Activated T-helper 2 cell treated with anti-CD3 and anti-CD28 coated beads, Interferon-gamma antibody, Interleukin-2, Interleukin-4, amounts not matched to agents 10 μg/mL and 5 μg/mL and 100 μg/mL, durations not matched to agents 14 hours and 24 hours and 36 hours (primary cell): ENCODE measurements at regions of chr20 and their contacts with region 1.

Region 1: GRCh38 chr20:354298-355064 is 7.6 kb downstream of the NRSN2 start:
- DNase-seq: peak; percentile 74
- H3K4me3 Mint-ChIP-seq: no peak overlapping the region
- H3K27ac Mint-ChIP-seq: no peak overlapping the region
- H3K4me1 Mint-ChIP-seq: peaks cover 4% of the 10 kb centered on the region
- H3K27me3 Mint-ChIP-seq: no peaks in the 10 kb centered on the region

Region 2: GRCh38 chr20:478949-479429 is 124.5 kb after region 1 on chr20:
- intact Hi-C with region 1: loop called (anchors 1 kb)
- DNase-seq: no peak
- H3K4me3 Mint-ChIP-seq: no peak overlapping the region
- H3K27ac Mint-ChIP-seq: no peak overlapping the region
- H3K4me1 Mint-ChIP-seq: peaks cover 13% of the 10 kb centered on the region
- H3K27me3 Mint-ChIP-seq: no peaks in the 10 kb centered on the region

Region 3: GRCh38 chr20:645318-646106 is 291.0 kb after region 1 on chr20:
- intact Hi-C with region 1: loop called (anchors 1 kb)
- DNase-seq: peak; percentile 68
- H3K4me3 Mint-ChIP-seq: no peak overlapping the region
- H3K27ac Mint-ChIP-seq: no peak overlapping the region
- H3K4me1 Mint-ChIP-seq: peaks cover 10% of the 10 kb centered on the region
- H3K27me3 Mint-ChIP-seq: peaks cover 20% of the 10 kb centered on the region